Activated CD4-positive, alpha-beta T cell treated with anti-CD3 and anti-CD28 coated beads, Interleukin-2, amount 10 ng/mL, durations not matched to agents 24 days and 14 days (primary cell): ENCODE measurements at regions of chr4 and their contacts with region 1.

Region 1: DNA sequence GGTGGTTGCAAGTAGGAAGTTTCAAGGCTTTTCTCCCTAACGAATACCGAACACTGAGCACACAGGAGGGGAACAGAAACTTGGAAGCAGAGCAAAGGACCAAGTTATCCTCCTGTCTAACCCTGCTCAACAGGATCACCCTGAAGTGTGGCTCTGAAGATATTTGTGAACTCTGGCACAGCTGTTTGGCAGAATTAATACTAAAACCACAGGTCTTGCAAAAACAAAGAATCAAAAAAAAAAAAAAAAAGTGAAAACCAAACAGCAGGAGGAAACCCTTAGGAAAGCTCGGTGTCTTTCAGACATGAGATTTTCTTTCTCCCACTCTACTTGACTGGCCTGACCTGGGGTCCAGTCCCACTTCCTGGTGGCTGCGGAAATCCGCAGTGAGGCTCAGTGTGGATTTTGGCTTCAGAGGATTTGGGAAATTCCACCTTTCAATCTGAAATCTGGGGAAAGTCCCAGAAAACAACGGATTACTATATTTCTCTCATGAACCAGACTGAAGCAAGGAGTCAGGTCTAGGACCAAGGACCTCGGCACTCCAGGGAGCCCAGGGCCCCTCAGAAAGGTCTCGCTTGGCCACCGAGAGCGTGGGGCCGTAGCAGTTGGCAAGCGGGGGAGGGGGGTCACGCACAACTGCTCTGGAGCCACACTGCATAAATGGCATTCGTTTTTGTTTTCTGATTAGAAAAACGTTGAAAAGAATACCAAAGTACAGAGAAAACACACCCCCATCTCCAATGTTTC is 867 bp downstream of the TIFA start:
- DNase-seq: peak; percentile 74
- H3K4me3 Mint-ChIP-seq: peak overlapping the region; percentile 95
- H3K27ac Mint-ChIP-seq: peak overlapping the region; percentile 94
- H3K4me1 Mint-ChIP-seq: peaks cover 77% of the 10 kb centered on the region
- H3K27me3 Mint-ChIP-seq: no peaks in the 10 kb centered on the region

Region 2: DNA sequence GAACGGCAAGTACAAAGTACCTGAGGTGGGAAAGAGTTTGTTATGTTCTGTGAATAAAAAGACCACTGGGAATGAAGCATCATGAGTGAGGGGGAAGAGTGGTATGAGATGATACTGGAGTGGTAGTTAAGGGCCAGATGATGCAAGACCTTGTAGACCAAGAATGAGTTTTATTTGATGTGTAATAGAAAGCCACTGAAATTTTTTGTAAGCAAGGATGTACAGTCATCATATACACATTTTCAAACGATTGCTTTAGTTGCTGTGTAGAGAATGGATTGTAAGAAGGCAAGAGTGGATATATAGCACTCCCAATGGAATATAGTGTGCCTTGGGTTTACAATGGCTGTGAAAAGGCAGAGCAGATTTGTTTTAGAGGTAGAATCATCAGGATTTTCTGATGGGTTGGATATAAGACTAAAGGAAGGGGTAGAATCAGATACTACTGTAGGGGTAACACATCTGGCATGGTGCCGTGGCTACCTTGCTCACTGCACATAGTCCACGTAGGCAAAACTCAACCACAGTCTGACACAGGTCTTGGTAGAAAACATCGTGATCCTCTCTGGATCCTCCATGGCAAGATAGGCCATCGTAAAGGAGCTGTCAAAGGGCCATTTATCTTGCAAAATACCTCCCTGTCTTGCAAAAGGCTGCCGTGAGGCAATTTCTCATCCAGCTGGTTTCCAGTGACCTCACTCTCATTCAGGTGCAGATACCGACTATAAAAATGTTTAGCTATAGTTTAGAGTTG is 14.0 kb before region 1 on chr4:
- intact Hi-C with region 1: loop called (anchors 1 kb)
- DNase-seq: no peak
- H3K4me3 Mint-ChIP-seq: no peak overlapping the region
- H3K27ac Mint-ChIP-seq: no peak overlapping the region
- H3K4me1 Mint-ChIP-seq: peaks cover 33% of the 10 kb centered on the region
- H3K27me3 Mint-ChIP-seq: no peaks in the 10 kb centered on the region

Region 3: GRCh38 chr4:112296949-112297880 is 12.4 kb after region 1 on chr4 and contains the start of gene ALPK1:
- intact Hi-C with region 1: loop called (anchors 1 kb)
- DNase-seq: peak; percentile 76
- H3K4me3 Mint-ChIP-seq: peak within 1 kb of the TSS; percentile 89
- H3K27ac Mint-ChIP-seq: peak within 1 kb of the TSS; percentile 89
- H3K4me1 Mint-ChIP-seq: peaks cover 30% of the 10 kb centered on the region
- H3K27me3 Mint-ChIP-seq: no peaks in the 10 kb centered on the region
- total RNA-seq, gene ALPK1: 8.8 and 9.1 TPM in 2 replicates

Region 4: DNA sequence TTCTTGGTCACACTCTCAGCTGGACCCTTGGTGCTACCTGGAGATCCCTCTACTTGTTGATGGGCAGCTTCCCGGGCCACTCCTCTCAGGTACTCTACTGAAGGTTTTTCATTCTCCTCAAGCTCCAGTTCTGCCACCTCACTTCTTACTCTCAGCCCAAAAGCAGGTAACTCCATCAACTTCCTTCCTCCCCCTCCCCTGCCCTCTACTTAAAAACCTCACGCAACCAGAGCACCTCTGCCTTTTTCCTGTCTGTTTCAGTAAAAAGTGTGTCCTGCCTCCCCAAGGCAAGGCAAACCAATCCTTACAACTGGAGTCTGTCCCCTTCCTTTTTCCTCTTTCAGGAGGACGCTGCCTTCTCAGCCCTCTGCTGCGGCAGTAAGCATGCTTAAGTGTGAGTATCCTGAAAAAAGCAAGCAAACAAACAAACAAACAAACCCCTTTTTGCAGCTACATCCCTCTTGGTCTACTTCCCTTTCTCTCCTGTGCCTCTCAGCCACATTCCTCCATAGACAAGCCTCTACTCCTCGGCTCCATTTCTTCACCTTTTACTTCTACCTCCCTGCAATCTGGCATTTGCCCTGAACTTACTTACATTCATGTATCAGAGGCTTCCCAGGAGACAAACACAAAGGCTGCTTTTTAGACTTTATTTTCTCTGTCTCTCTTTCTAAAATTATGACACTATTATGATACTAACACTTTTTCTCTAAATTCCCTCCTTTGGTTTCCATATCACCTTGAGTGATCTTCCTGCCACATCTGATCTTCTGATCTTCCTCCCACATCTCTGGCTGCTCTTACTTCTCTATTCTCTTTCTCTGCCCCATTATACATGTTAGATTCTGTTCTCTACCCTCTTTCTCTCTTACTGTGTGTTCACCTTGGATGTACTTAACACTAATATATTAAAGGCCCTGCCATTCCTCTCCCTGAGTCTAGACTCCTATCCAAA is 17.8 kb after region 1 on chr4:
- intact Hi-C with region 1: loop called (anchors 1 kb)
- DNase-seq: peak; percentile 73
- H3K4me3 Mint-ChIP-seq: no peak overlapping the region
- H3K27ac Mint-ChIP-seq: no peak overlapping the region
- H3K4me1 Mint-ChIP-seq: peaks cover 28% of the 10 kb centered on the region
- H3K27me3 Mint-ChIP-seq: no peaks in the 10 kb centered on the region

Region 5: DNA sequence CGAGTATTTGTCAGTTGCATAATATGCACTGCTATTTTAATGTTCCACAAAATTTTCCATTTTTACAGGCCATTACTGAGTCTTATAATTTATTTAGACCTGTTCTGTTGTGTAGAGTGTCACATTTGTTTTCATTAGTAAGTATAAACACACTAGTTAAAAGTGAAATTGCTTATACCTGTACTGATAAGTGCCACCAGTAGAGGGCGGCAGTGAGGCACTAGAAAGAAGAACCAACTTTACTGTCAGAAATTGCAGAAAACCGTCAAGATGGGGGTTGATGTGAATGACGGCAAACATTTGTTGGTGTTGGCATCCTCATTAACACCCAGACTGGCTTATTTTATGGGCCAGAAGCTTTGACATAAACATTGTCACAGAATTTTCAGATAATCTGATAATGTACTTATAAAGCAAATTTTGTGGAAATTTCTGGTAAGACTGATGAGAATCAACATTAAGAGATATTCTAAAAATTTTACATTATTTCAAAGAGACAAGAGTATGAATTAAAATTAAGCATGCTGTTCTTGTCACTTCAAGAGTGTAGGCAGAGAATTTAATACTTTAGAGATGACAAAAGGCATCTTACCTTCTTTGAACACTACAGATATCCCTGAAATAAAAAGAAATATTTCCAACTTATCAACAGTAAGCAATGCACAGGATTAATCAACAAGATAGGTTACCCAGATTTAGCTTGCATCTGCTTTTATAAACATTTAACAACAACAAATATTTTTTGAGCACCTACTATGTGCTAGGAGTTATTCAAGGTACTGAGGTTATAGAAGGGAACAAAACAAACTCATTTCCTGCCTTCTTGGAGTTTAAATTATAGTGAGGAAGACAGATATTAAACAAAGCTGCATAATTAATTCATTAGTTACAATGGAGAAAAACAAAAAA is 37.2 kb after region 1 on chr4:
- intact Hi-C with region 1: loop called (anchors 1 kb)
- DNase-seq: peak; percentile 93
- H3K4me3 Mint-ChIP-seq: no peak overlapping the region
- H3K27ac Mint-ChIP-seq: no peak overlapping the region
- H3K4me1 Mint-ChIP-seq: peaks cover 29% of the 10 kb centered on the region
- H3K27me3 Mint-ChIP-seq: no peaks in the 10 kb centered on the region